CD14-positive monocyte (primary cell): ENCODE measurements at regions of chr6 and their contacts with region 1.

Region 1: GRCh38 chr6:139839506-139840156 is 465.2 kb upstream of the CITED2 start:
- DNase-seq: peak; percentile 94 to 98 (median 97)
- H3K4me3 ChIP-seq: peak overlapping the region; percentile 58 to 97 (median 75)
- H3K4me3 Mint-ChIP-seq: peak overlapping the region; percentile 77 to 90
- H3K27ac ChIP-seq: peak overlapping the region; percentile 85 to 97
- H3K27ac Mint-ChIP-seq: peak overlapping the region; percentile 96 to 99 (median 98)
- H3K4me1 ChIP-seq: peaks cover 37 to 41% of the 10 kb centered on the region in 2 donors
- H3K4me1 Mint-ChIP-seq: peaks cover 34% of the 10 kb centered on the region
- H3K27me3 ChIP-seq: no peaks in the 10 kb centered on the region
- H3K27me3 Mint-ChIP-seq: peaks cover 0 to 2% (median 0%) of the 10 kb centered on the region in 3 donors
- CTCF ChIP-seq: no peak

Region 2: GRCh38 chr6:139881728-139882211 is 42.1 kb after region 1 on chr6:
- intact Hi-C with region 1: loop called in 1 of 2 experiments (anchors 5 kb)
- DNase-seq: peak in 2 of 3 donors; percentile 24 to 35
- H3K4me3 ChIP-seq: peak overlapping the region in 1 of 3 experiments; percentile 12
- H3K4me3 Mint-ChIP-seq: no peak overlapping the region
- H3K27ac ChIP-seq: peak overlapping the region in 1 of 2 donors; percentile 68
- H3K27ac Mint-ChIP-seq: peak overlapping the region in 4 of 7 donors; percentile 61 to 80 (median 68)
- H3K4me1 ChIP-seq: peaks cover 39 to 47% of the 10 kb centered on the region in 2 donors
- H3K4me1 Mint-ChIP-seq: peaks cover 42% of the 10 kb centered on the region
- H3K27me3 ChIP-seq: no peaks in the 10 kb centered on the region
- H3K27me3 Mint-ChIP-seq: peaks cover 0 to 2% (median 0%) of the 10 kb centered on the region in 3 donors
- CTCF ChIP-seq: peak; percentile 63

Region 3: GRCh38 chr6:140070846-140071464 is 231.3 kb after region 1 on chr6:
- intact Hi-C with region 1: no loop called
- DNase-seq: no peak
- H3K4me3 ChIP-seq: no peak overlapping the region
- H3K4me3 Mint-ChIP-seq: no peak overlapping the region
- H3K27ac ChIP-seq: no peak overlapping the region
- H3K27ac Mint-ChIP-seq: no peak overlapping the region
- H3K4me1 ChIP-seq: peaks cover 3 to 13% of the 10 kb centered on the region in 2 donors
- H3K4me1 Mint-ChIP-seq: peaks cover 15% of the 10 kb centered on the region
- H3K27me3 ChIP-seq: no peaks in the 10 kb centered on the region
- H3K27me3 Mint-ChIP-seq: peaks cover 0 to 2% (median 0%) of the 10 kb centered on the region in 3 donors
- CTCF ChIP-seq: no peak